ENCODE measurements at regions of chr1 and their contacts with region 1.

Region 1: DNA sequence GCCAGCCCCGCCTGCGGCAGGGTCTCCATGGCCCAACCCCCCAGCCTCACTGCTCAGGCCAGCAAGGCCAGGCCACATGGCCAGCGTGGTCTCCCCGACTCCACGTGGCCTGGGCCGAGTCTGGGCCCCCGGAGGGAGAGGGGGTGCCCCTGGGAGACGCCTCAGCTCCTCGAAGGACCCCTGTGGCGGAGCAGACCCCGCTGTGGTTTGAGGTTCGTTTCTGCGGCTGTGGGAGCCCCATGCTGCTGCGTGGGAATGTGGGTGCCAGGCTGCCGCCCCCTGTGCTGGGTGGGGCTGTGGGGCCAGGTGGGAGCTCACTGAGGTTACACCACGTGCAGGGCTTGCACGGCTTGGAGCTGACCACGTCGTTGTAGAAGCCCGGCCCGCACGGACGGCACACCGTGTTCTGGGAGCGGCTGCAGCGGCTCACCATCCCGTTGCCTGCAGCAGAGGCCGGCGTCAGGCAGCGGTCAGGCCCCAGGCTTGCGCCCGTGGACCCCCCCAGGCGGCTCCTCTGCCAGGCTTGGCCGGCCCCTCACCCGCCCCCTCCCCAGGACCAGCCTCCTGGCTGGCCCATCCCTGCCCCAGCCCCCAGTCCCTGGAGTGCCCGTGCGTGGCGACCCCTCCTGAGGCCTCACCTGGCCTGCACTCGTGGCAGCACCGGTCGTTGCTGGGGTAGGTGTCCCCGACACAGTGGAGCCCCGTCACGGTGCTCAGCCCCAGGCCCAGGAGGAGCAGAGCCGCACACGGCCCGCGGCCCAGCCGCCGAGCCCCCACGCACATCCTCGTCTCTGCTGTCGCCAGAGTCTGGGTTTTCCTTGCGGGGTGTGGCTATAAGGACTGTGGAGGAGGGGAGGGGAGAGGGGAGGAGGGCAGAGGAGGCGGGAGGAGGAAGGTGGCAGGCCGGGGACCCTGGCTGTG is at the start of gene TNFRSF4:
- DNase-seq: no peak
- H3K4me3 Mint-ChIP-seq: peak within 1 kb of the TSS; percentile 77
- H3K27ac Mint-ChIP-seq: peak within 1 kb of the TSS; percentile 81
- H3K4me1 Mint-ChIP-seq: peaks cover 37% of the 10 kb centered on the region
- H3K27me3 Mint-ChIP-seq: no peaks in the 10 kb centered on the region
- total RNA-seq, gene TNFRSF4: 441 and 458 TPM in 2 replicates

Region 2: GRCh38 chr1:1231400-1232223 is 18.0 kb after region 1 on chr1 and contains the start of gene SDF4:
- intact Hi-C with region 1: loop called (anchors 2 kb)
- DNase-seq: peak; percentile 97
- H3K4me3 Mint-ChIP-seq: peak within 1 kb of the TSS; percentile 92
- H3K27ac Mint-ChIP-seq: peak within 1 kb of the TSS; percentile 81
- H3K4me1 Mint-ChIP-seq: peaks cover 23% of the 10 kb centered on the region
- H3K27me3 Mint-ChIP-seq: no peaks in the 10 kb centered on the region
- total RNA-seq, gene SDF4: 161 and 164 TPM in 2 replicates

Measured in activated T-helper 2 cell treated with anti-CD3 and anti-CD28 coated beads, Interferon-gamma antibody, Interleukin-2, Interleukin-4, amounts not matched to agents 10 μg/mL and 5 μg/mL and 100 μg/mL, durations not matched to agents 14 hours and 24 hours and 36 hours (primary cell).